GM12878 (cell line): ENCODE measurements at regions of chr1 and their contacts with region 1.

Region 1: DNA sequence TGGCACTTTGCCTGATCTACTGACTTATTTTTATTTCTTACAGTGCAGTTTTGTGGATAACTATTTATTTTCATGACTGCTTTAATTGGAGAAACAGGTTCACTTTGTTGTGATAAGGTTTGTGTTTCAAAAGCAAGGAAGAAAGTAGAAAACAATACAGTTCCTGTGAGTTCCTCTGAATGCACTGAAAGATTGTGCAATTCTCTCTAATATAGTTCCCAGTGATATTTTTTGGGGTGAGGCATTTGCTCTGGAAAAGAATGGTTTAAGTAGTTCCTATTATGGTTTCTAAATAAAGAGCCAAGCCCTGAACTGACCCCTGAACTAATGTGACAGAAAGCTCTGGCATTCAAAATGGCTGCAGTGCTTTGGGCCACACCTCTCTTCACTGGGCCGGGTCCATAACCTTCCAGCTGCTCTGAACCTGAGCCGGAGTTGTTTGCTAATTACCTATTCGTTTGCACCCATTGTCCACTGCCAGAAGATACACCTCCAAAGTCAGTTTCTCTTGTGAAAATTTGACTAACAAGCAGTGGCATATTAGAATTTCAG is 56.6 kb upstream of the VTCN1 start:
- DNase-seq: no peak
- ATAC-seq: no peak
- H3K4me3 ChIP-seq: no peak overlapping the region
- H3K27ac ChIP-seq: no peak overlapping the region
- H3K4me1 ChIP-seq: no peaks in the 10 kb centered on the region
- H3K27me3 ChIP-seq: peaks cover 0 to 2% of the 10 kb centered on the region in 2 experiments; a peak in 2 of 4 replicates
- CTCF ChIP-seq: no peak
- EP300 ChIP-seq: no peak
- POLR2A ChIP-seq: no peak
- RAD21 ChIP-seq: no peak

Region 2: GRCh38 chr1:117250061-117250606 is 17.2 kb before region 1 on chr1:
- CTCF ChIA-PET with region 1: no interaction called
- POLR2A ChIA-PET with region 1: no interaction called
- RAD21 ChIA-PET with region 1: no interaction called
- SMC1A ChIA-PET with region 1: no interaction called
- in situ Hi-C with region 1: no loop called
- intact Hi-C with region 1: loop called (anchors 2 kb)
- DNase-seq: no peak
- ATAC-seq: no peak
- H3K4me3 ChIP-seq: no peak overlapping the region
- H3K27ac ChIP-seq: no peak overlapping the region
- H3K4me1 ChIP-seq: no peaks in the 10 kb centered on the region
- H3K27me3 ChIP-seq: no peaks in the 10 kb centered on the region
- CTCF ChIP-seq: no peak
- EP300 ChIP-seq: no peak
- POLR2A ChIP-seq: no peak
- RAD21 ChIP-seq: no peak

Region 3: GRCh38 chr1:117367047-117368018 is 100.0 kb after region 1 on chr1 and contains the start of gene MAN1A2:
- CTCF ChIA-PET with region 1: no interaction called
- POLR2A ChIA-PET with region 1: no interaction called
- RAD21 ChIA-PET with region 1: no interaction called
- SMC1A ChIA-PET with region 1: no interaction called
- in situ Hi-C with region 1: no loop called
- intact Hi-C with region 1: no loop called
- DNase-seq: peak; percentile 53
- ATAC-seq: peak; percentile 77
- H3K4me3 ChIP-seq: peak within 1 kb of the TSS; percentile 96
- H3K27ac ChIP-seq: peak within 1 kb of the TSS; percentile 92
- H3K4me1 ChIP-seq: peaks cover 20% of the 10 kb centered on the region
- H3K27me3 ChIP-seq: no peaks in the 10 kb centered on the region
- CTCF ChIP-seq: no peak
- EP300 ChIP-seq: no peak
- POLR2A ChIP-seq: peak; percentile 79
- RAD21 ChIP-seq: no peak
- polyA plus RNA-seq, gene MAN1A2: 2.8 to 3.2 TPM